Astrocyte of the cerebellum (primary cell): ENCODE measurements at regions of chr4 and their contacts with region 1.

Region 1: DNA sequence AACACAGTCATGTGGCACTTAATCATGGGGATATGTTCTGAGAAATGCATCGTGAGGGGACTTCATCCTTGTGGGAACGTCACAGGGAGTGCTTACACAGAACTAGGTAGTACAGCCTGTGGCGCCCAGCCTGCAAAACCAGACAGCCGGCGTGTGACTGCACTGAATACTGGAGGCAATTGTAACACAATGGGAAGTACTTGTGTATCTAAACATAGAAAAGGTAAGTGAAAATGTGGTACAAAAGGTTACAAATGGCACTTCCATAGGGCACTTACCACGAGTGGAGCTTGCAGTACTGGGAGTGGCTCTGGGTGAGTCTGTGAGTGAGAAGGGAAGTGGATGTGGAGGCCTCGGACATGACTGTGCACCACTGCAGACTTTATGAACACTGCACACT is 5.2 kb downstream of the TLR3 start:
- DNase-seq: no peak
- H3K4me3 ChIP-seq: no peak overlapping the region
- CTCF ChIP-seq: no peak

Region 2: GRCh38 chr4:186109245-186109644 is 35.1 kb after region 1 on chr4:
- in situ Hi-C with region 1: no loop called
- DNase-seq: no peak
- H3K4me3 ChIP-seq: no peak overlapping the region
- CTCF ChIP-seq: no peak

Region 3: DNA sequence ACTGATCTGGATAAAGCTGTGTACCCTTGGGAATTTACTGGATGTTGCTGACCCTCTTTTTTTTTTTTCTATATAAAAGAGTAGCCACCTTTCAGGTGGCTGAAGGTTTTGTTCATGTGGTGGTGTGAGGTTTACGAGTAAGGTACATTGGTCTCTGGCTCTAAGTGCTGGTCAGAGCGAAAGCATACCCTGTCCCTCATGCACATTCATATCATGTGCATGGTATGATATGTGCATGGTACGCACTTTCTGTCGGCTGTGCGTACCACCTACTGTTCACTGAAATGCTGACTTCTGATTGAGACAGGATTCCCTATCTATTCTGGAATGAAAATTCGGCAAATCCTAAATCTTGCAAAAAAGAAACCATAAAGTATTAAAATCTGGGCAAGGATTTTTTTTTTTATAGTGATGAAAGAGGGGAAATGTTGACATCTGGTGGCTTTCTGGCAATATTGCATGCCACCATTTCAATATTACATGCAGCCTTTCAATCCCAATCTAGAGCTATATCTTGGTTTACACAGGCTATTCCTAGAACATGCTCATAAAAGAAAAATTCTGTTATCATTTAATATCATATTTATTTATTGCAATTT is 63.1 kb after region 1 on chr4:
- in situ Hi-C with region 1: loop called (anchors 5 kb)
- DNase-seq: no peak
- H3K4me3 ChIP-seq: no peak overlapping the region
- CTCF ChIP-seq: peak; percentile 63